Caco-2 (cell line): ENCODE measurements at regions of chr13 and their contacts with region 1.

Region 1: GRCh38 chr13:19794635-19795423 is 12.1 kb upstream of the PSPC1 start:
- DNase-seq: peak; percentile 90 to 92
- H3K4me3 ChIP-seq: no peak overlapping the region
- H3K4me3 Mint-ChIP-seq: peak overlapping the region; percentile 69
- H3K27ac Mint-ChIP-seq: peak overlapping the region; percentile 99
- H3K4me1 ChIP-seq: peaks cover 49% of the 10 kb centered on the region
- H3K4me1 Mint-ChIP-seq: peaks cover 32% of the 10 kb centered on the region
- H3K27me3 ChIP-seq: no peaks in the 10 kb centered on the region
- H3K27me3 Mint-ChIP-seq: no peaks in the 10 kb centered on the region
- CTCF ChIP-seq: no peak

Region 2: DNA sequence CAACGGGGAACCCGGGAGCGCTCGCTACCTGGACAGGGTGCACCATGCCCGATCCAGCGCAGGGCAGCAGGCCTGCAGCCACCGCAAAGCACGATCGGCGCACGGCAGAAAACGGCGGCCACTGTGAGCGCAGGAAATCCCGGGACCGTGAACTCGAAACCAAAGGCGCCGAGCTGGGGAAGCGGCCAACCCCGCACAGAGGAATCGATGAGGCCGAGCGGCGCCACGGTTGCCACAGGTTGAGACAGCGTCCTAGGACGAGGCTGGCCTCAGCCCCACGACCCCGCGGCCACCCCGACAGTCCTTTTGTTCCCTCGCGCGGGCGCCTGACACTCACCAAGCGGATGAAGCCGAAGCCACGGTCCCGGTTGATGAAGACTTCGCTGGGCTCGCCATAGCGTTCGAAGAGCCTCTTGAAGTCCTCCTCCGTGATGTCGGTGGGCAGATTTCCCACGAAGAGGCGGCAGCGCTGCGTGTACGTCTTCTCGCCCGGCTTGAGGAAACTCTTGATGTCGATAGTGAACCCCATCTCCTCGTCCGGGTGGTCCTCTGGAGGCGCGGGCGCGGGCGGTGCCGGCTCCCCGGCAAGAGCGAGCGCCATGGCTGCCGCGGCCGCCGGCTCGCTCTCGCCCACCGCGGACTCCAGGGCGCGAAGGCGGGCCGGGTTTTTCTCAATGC is 12.6 kb before region 1 on chr13:
- CTCF ChIA-PET with region 1: no interaction called
- POLR2A ChIA-PET with region 1: no interaction called
- intact Hi-C with region 1: loop called (anchors 1 kb)
- DNase-seq: peak; percentile 43 to 60
- H3K4me3 ChIP-seq: peak overlapping the region; percentile 81
- H3K4me3 Mint-ChIP-seq: peak overlapping the region; percentile 94
- H3K27ac Mint-ChIP-seq: peak overlapping the region; percentile 93
- H3K4me1 ChIP-seq: no peaks in the 10 kb centered on the region
- H3K4me1 Mint-ChIP-seq: peaks cover 8% of the 10 kb centered on the region
- H3K27me3 ChIP-seq: no peaks in the 10 kb centered on the region
- H3K27me3 Mint-ChIP-seq: no peaks in the 10 kb centered on the region
- CTCF ChIP-seq: no peak

Region 3: GRCh38 chr13:19810996-19811891 is 16.4 kb after region 1 on chr13:
- CTCF ChIA-PET with region 1: no interaction called
- POLR2A ChIA-PET with region 1: interaction called, 3 read pairs
- intact Hi-C with region 1: loop called (anchors 2 kb)
- DNase-seq: peak; percentile 52 to 79
- H3K4me3 ChIP-seq: no peak overlapping the region
- H3K4me3 Mint-ChIP-seq: no peak overlapping the region
- H3K27ac Mint-ChIP-seq: no peak overlapping the region
- H3K4me1 ChIP-seq: no peaks in the 10 kb centered on the region
- H3K4me1 Mint-ChIP-seq: no peaks in the 10 kb centered on the region
- H3K27me3 ChIP-seq: no peaks in the 10 kb centered on the region
- H3K27me3 Mint-ChIP-seq: no peaks in the 10 kb centered on the region
- CTCF ChIP-seq: no peak

Region 4: DNA sequence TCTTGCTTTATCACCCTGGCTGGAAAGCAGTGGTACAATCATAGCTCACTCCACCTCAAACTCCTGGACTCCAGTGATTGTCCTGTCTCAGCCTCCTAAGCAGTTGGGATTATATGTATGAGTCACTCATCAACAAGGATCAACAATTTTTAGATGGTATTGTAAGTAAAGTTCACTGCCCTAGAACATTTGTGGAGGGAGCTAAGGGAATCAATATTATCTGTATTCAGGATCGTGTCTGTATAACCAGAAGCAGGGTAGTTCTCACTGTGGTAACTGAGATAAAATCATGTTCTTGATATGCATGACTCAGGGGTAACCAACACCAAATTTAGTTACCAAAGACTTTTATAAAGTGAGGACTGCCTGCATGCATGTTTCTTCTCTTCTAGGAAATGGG is 41.6 kb after region 1 on chr13:
- CTCF ChIA-PET with region 1: no interaction called
- POLR2A ChIA-PET with region 1: no interaction called
- intact Hi-C with region 1: no loop called
- DNase-seq: no peak
- H3K4me3 ChIP-seq: no peak overlapping the region
- H3K4me3 Mint-ChIP-seq: no peak overlapping the region
- H3K27ac Mint-ChIP-seq: no peak overlapping the region
- H3K4me1 ChIP-seq: no peaks in the 10 kb centered on the region
- H3K4me1 Mint-ChIP-seq: no peaks in the 10 kb centered on the region
- H3K27me3 ChIP-seq: no peaks in the 10 kb centered on the region
- H3K27me3 Mint-ChIP-seq: no peaks in the 10 kb centered on the region
- CTCF ChIP-seq: no peak

Region 5: DNA sequence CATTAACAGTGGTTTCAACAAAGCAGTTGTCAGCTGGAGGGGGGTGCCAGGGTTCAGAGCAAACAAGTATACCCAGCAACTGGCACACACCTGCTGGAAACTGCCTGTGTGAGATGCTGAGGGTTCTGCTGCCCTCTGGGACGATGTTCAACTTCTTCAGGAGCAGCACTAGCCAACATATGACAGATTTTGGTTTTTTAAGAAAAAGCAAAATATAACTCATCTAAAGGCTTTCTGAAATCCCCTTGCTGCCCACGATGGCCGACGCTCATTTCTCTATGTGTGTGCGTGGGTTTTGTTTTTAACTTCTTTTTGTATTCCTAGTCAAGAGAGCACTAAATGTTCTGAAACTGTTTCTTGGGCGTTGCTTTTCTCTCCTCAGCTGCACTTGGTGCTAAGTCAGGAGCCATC is 1461.5 kb after region 1 on chr13:
- CTCF ChIA-PET with region 1: no interaction called
- POLR2A ChIA-PET with region 1: interaction called, 10 read pairs
- intact Hi-C with region 1: no loop called
- DNase-seq: no peak
- H3K4me3 ChIP-seq: no peak overlapping the region
- H3K4me3 Mint-ChIP-seq: no peak overlapping the region
- H3K27ac Mint-ChIP-seq: no peak overlapping the region
- H3K4me1 ChIP-seq: no peaks in the 10 kb centered on the region
- H3K4me1 Mint-ChIP-seq: no peaks in the 10 kb centered on the region
- H3K27me3 ChIP-seq: no peaks in the 10 kb centered on the region
- H3K27me3 Mint-ChIP-seq: peaks cover 4% of the 10 kb centered on the region
- CTCF ChIP-seq: no peak